Activated naive CD4-positive, alpha-beta T cell treated with anti-CD3 and anti-CD28 coated beads, Interleukin-2, amount 10 ng/mL, durations not matched to agents 7 days and 5 days (primary cell): ENCODE measurements at regions of chr11 and their contacts with region 1.

Region 1: GRCh38 chr11:7513234-7514098 is at the start of gene PPFIBP2:
- DNase-seq: peak; percentile 88
- H3K4me3 Mint-ChIP-seq: peak within 1 kb of the TSS; percentile 92
- H3K27ac Mint-ChIP-seq: peak within 1 kb of the TSS; percentile 92
- H3K4me1 Mint-ChIP-seq: peaks cover 57% of the 10 kb centered on the region
- H3K27me3 Mint-ChIP-seq: peaks cover 44% of the 10 kb centered on the region

Region 2: DNA sequence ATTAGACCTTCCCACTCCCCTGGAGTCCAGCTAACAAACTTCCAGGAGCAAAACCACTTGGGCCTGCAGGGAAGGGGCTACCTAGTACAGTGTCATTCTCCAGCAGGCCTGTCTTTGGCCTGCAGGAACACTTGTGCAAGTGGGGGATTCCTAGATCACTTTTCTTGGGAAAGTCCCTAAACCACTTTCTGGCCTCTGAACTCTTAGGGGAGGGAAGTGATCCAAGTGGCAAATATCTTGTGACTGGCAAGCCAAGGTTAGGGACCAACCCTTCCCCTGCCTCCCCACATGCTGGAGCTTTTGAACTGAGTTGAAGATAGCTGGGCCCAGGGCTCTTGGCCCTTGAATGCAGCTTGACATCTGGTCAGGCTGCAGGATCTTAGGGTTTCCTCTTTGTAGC is 17.5 kb after region 1 on chr11:
- CTCF ChIA-PET with region 1: interaction called, 15 read pairs
- DNase-seq: no peak
- H3K4me3 Mint-ChIP-seq: no peak overlapping the region
- H3K27ac Mint-ChIP-seq: no peak overlapping the region
- H3K4me1 Mint-ChIP-seq: peaks cover 82% of the 10 kb centered on the region
- H3K27me3 Mint-ChIP-seq: peaks cover 10% of the 10 kb centered on the region

Region 3: DNA sequence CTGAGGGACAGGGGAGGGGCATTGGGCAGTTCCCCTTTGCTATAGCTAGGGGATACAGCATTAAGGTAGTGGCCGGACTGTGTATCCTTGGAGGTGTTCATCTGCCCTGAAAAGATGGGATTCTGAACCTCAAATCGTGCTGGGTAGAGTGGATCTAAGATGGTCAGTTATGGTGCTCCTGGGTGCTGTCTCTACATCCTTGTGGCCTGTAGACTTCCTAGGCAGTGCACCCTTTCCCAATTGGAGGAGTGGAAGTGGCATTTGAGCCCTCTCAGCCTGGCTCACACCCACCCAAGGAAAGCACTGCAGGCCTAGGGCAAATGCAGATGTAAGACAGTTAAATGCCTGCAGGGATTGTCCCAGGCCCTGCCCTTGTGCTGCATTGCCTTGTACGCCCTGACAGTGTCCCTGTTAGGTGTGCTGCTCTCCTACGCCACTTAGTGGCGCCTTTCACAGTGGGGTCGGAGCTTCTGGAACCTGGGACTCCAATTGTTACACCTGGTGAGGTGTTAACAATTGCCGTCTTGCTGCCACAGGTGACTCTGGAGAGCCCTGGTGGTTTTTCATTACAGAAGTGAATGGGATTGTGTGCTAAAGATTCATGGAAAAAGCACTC is 35.3 kb after region 1 on chr11:
- CTCF ChIA-PET with region 1: interaction called, 40 read pairs
- DNase-seq: peak; percentile 68
- H3K4me3 Mint-ChIP-seq: no peak overlapping the region
- H3K27ac Mint-ChIP-seq: no peak overlapping the region
- H3K4me1 Mint-ChIP-seq: peaks cover 4% of the 10 kb centered on the region
- H3K27me3 Mint-ChIP-seq: peaks cover 5% of the 10 kb centered on the region

Region 4: GRCh38 chr11:7571640-7572000 is 58.2 kb after region 1 on chr11:
- CTCF ChIA-PET with region 1: interaction called, 20 read pairs
- DNase-seq: no peak
- H3K4me3 Mint-ChIP-seq: no peak overlapping the region
- H3K27ac Mint-ChIP-seq: no peak overlapping the region
- H3K4me1 Mint-ChIP-seq: peaks cover 23% of the 10 kb centered on the region
- H3K27me3 Mint-ChIP-seq: peaks cover 80% of the 10 kb centered on the region

Region 5: GRCh38 chr11:7657306-7658025 is 144.0 kb after region 1 on chr11:
- CTCF ChIA-PET with region 1: interaction called, 43 read pairs
- DNase-seq: peak; percentile 55
- H3K4me3 Mint-ChIP-seq: no peak overlapping the region
- H3K27ac Mint-ChIP-seq: no peak overlapping the region
- H3K4me1 Mint-ChIP-seq: no peaks in the 10 kb centered on the region
- H3K27me3 Mint-ChIP-seq: no peaks in the 10 kb centered on the region

Region 6: DNA sequence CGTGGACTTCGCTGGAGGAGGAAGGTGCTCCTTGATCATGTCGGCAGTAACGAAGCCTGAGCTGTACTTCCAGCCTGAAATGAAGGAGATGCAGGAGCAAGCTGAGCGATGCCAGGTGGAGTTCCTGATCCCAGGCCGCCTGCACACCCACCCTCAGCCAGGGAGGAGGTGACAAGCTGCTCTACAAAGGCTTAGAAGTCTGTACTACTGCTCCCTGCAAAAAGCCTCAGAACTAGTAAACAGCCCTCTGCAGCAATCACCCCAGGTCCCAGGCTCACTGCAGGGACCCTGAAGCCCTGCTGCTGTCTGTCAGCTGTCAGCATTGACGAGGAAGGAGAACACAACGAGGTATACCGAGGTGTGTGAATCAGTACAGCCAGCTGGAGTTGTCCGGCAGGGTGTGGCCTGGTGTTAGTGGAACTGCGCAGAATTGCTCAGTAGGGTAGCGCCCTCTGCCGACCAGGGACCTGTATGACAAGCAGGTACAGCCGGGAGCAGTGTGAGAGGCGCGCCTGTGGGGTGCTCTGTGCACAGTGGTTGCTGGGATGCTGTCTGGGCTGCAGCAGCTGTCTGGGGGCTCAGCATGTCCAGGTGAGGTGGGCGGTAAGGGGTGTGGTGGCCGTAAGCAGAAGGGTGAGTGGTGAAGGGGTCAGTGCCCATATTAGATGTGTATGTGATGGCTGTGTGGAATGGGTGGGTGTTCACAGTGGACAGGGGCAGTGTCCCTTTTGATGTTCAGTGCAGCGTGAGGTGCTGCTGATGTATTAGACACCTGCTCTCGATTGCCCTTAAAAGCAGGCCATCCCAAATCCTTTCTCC is 152.2 kb after region 1 on chr11:
- CTCF ChIA-PET with region 1: interaction called, 22 read pairs
- DNase-seq: peak; percentile 81
- H3K4me3 Mint-ChIP-seq: no peak overlapping the region
- H3K27ac Mint-ChIP-seq: no peak overlapping the region
- H3K4me1 Mint-ChIP-seq: no peaks in the 10 kb centered on the region
- H3K27me3 Mint-ChIP-seq: peaks cover 4% of the 10 kb centered on the region

Region 7: GRCh38 chr11:7687386-7687785 is 173.9 kb after region 1 on chr11:
- CTCF ChIA-PET with region 1: interaction called, 11 read pairs
- DNase-seq: no peak
- H3K4me3 Mint-ChIP-seq: no peak overlapping the region
- H3K27ac Mint-ChIP-seq: no peak overlapping the region
- H3K4me1 Mint-ChIP-seq: no peaks in the 10 kb centered on the region
- H3K27me3 Mint-ChIP-seq: peaks cover 27% of the 10 kb centered on the region

Region 8: GRCh38 chr11:7882860-7883259 is 369.4 kb after region 1 on chr11:
- CTCF ChIA-PET with region 1: no interaction called
- DNase-seq: no peak
- H3K4me3 Mint-ChIP-seq: no peak overlapping the region
- H3K27ac Mint-ChIP-seq: no peak overlapping the region
- H3K4me1 Mint-ChIP-seq: no peaks in the 10 kb centered on the region
- H3K27me3 Mint-ChIP-seq: peaks cover 14% of the 10 kb centered on the region